ENCODE measurements at regions of chr1 and their contacts with region 1.

Region 1: DNA sequence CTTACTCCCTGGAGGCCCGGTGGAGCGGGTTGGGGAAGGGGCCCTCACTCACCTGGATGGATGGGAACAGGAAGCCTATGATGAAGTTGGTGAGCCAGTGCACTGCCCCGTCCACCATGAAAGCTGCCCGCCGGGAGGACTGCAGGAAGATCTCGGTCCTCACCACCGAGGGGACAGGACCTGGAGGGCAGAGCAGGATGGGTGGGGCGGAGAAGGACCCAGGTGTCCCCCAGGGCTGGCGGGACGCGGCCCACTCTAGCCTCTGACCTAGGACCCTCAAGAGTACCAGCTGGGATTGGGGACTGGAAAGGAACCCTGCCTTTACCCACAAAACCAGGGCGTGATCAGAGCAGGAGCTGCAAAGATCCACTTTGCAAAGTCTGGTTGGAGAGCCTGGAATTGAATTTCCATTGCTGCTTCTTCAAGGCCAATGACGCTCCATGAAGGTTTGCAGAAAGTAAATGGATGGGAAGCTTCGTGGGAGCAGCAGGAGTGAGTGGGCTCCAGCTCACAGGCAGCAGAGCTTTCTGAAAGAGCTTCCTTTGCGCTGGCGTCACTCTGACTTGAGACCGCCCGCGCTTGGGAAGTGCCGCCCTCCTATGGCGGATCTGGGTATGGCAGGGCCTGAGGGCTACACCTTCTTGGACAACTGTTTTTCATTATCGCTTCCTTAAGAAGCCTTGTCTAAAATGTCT is 21.4 kb downstream of the SLC2A7 start:
- DNase-seq: peak; percentile 88

Region 2: DNA sequence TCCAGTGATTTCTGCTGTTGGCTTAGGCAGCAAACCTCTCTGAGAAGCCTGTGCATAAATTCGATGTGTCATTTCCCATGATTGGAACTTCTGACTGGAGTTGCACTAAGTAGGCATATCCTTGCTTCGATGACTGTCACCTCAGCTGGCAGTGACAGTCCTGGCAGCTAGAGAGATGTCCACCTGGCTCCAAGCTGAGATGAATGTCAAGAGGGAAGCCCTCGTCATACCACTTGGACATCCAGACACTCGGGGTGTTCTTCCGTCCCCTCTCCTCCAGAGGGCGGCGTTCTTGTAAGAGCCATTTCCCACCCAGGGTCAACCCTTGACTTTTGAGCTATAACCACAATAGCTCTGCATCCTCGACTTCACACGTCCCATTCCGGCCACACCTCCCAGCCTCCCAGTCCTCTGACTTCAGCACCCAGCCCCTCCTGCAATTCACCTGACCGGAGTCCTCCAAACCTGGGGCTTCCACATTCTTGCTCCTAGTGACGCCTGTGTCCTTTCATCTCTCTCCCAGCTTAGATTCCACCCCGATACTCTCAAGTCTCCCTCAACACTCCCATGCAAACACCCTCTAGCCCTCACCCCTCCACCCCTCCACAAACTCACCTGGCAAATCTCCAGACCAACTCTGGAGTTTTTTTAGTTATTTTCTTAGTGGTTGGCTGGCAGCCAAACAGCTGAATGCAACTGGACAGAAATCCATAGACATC is 41.9 kb before region 1 on chr1:
- intact Hi-C with region 1: no loop called
- DNase-seq: no peak

Region 3: DNA sequence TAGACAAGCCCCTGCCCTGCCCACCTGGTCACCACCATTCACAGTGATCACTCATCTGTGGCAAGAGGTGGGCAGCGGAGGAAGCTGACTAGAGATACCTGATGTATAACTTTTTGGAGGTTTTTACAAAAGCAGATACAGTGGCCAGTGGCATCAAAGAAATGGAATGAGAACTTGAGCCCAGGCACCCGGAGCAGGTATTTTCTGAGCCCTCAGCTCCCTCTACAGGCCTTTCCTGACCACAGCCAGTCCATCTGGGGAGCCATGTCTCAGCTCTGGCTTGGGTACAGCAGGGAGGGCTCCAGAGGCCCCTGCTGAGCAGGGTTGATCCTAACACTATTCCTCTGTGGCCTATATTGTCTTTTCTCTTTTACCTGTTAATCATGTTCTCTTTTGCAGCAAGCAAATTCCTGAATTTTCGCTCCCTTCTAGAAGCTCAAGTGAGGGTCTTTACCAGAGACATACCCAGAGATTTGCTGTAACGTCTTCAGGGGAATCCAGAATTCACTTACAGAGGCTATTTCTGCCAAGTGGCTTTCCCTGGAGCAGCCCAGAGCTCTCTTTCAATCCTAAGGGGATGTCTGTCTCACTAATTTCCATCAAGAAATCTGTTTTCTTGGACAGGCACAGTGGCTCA is 96.8 kb after region 1 on chr1:
- intact Hi-C with region 1: loop called (anchors 2 kb)
- DNase-seq: no peak